Activated CD4-positive, alpha-beta memory T cell treated with anti-CD3 and anti-CD28 coated beads for 36 hours (primary cell): ENCODE measurements at regions of chr5 and their contacts with region 1.

Region 1: DNA sequence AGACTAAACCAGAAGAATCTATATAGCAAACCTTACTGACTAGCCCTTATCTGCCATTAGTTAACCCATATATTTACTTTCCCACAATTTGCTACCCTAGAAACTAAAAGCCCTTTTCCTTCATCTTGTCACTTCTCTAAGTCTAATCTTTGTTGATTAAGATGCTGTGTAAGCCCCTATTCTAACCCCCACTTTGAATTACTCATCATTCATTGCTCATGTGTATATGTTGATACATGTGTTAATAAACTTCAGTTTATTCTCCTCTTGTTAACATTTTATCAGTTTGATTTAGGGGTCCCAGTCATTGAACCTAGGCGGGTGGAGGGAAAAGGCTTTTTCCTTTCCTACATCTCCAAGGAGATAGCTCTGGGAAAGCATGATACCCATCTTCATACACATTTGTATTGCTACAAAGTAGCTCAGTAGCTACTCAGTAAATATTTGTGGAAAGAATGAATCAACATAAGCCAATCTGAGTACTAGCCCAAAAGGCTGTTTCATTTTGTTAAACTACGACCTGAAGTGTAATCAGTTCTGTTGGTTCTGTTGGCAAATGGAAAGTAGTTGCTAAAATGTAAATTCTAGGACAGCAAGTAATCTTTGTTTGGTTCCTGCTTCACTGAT is 35.1 kb upstream of the NDFIP1 start:
- DNase-seq: no peak
- H3K4me3 Mint-ChIP-seq: no peak overlapping the region
- H3K27ac Mint-ChIP-seq: peak overlapping the region; percentile 56
- H3K4me1 Mint-ChIP-seq: peaks cover 30% of the 10 kb centered on the region
- H3K27me3 Mint-ChIP-seq: no peaks in the 10 kb centered on the region

Region 2: GRCh38 chr5:142087920-142088679 is 14.6 kb after region 1 on chr5:
- CTCF ChIA-PET with region 1: interaction called, 4 read pairs
- POLR2A ChIA-PET with region 1: no interaction called
- intact Hi-C with region 1: loop called (anchors 1 kb)
- DNase-seq: peak; percentile 88
- H3K4me3 Mint-ChIP-seq: peak overlapping the region; percentile 61
- H3K27ac Mint-ChIP-seq: peak overlapping the region; percentile 95
- H3K4me1 Mint-ChIP-seq: peaks cover 61% of the 10 kb centered on the region
- H3K27me3 Mint-ChIP-seq: no peaks in the 10 kb centered on the region